Posterior vena cava (tissue), 2 donors: ENCODE measurements at regions of chr9 and their contacts with region 1.

Region 1: DNA sequence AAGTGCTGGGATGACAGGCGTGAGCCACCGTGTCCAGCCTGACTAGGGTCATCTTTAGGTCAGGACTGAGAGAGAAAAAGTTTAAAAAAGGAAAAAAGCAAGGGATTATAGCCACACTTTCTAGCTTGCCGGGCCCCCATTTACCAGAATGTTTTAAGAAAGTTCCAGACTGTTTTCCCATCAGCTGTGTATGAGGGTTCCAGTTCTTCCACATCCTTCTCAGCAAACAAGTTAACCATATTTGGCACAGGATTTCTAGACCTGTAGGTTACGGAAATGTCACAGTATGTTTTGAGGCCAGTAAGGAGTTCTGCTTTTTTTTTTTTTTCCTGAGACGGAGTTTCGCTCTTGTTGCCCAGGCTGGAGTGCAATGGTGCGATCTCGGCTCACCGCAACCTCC is 7.2 kb upstream of the FAM120A start:
- DNase-seq: no peak

Region 2: DNA sequence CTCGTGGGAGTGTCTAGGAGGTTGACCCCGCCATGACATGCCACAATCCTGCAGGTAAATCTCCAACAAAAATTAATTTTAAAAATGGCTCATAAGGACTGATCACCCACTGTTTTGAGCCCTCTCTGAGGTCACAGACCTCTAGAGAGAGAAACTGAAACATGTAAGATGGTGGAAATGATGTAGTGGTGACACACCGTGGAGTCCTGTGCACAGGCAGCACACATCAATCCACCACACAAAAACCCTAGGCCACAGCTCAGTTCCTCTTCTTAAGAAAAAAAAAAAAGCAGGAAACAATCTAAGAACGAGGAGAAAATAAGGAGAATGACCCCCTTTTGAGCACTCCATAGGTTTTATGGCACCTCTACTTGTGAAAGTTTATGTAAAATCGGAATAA is 86.7 kb before region 1 on chr9:
- intact Hi-C with region 1: no loop called
- DNase-seq: no peak

Region 3: DNA sequence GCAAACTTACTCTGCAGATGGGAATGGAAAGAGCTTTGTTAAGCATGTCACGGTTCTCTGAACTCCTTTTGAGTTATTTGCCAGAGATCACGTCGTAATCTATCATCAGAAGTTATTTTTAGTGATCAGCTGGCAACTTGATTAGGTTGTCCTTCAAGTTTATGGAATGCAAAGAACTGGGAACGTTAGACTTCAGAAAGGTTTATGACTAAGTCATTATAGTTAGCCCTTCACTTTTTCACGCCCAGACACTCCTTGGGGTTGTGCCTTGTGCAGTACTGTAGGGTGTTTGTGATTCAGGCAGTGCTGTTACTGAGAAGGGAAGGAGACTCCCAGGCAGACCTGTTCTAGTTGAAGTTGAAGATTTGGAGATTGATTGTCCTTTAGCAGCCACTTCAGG is 105.3 kb after region 1 on chr9:
- intact Hi-C with region 1: loop called in 1 of 2 experiments (anchors 5 kb)
- DNase-seq: no peak

Region 4: GRCh38 chr9:95230046-95230445 is 1785.7 kb after region 1 on chr9:
- intact Hi-C with region 1: loop called in 1 of 2 experiments (anchors 5 kb)
- DNase-seq: no peak